Endothelial cell of umbilical vein (primary cell): ENCODE measurements at regions of chr10 and their contacts with region 1.

Region 1: DNA sequence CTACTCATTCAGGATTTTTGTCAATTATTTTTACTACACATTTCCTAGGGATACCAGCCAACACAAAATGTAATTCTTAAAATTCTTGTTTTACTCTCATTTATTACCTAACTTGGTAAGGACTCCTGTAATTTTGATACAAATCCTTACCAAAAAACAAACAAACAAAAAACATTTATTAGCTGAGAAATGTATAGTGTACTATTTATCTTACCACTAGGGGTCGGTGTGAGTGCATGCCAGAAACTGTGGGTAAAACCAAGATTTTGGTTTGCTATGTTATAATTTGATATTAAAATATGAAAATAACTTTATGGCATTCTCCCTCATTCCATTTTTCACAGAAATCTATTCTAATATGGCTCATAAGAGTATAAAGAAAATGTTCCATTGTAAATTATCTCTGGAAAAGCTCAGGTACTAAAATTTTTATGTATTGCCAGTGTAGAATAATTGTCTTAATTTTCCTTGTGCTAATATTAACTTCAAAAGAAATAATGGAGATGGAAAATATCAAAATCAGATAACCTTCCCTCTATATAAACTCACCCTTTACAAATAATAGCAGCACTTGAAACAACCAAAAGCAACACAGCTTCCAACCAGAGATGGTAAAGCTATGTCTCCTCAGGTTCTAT is 290.8 kb upstream of the PCDH15 start:
- DNase-seq: peak; percentile 21
- H3K4me3 ChIP-seq: no peak overlapping the region
- H3K27ac ChIP-seq: no peak overlapping the region
- H3K4me1 ChIP-seq: no peaks in the 10 kb centered on the region
- H3K27me3 ChIP-seq: no peaks in the 10 kb centered on the region
- CTCF ChIP-seq: peak; percentile 44 to 53
- POLR2A ChIP-seq: no peak

Region 2: GRCh38 chr10:55104738-55105137 is 12.9 kb after region 1 on chr10:
- CTCF ChIA-PET with region 1: interaction called, 11 read pairs
- POLR2A ChIA-PET with region 1: no interaction called
- dilution Hi-C with region 1: no loop called
- intact Hi-C with region 1: no loop called
- DNase-seq: no peak
- H3K4me3 ChIP-seq: no peak overlapping the region
- H3K27ac ChIP-seq: no peak overlapping the region
- H3K4me1 ChIP-seq: no peaks in the 10 kb centered on the region
- H3K27me3 ChIP-seq: no peaks in the 10 kb centered on the region
- CTCF ChIP-seq: no peak
- POLR2A ChIP-seq: no peak

Region 3: DNA sequence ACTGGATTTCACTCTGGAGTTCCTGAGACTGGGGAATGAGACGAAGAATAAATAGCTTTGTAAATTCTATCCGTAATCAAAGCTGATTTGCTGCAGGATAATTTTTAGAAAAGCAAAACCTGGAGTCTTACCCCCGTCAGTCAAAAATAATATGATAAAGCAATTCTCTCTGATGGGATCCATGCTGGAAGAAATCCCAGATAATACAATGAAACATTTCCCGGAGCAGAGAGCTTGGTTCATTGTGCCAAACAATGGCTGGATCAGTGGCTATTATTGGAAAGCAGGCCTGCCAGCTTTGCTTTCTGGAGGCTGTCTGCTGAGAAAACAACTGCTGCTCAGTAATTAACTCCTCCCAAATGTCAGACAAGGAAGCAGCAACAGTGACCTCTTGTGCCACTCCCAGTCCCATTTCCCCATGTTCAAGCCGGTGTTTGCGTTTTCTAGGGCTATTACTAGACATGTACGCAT is 318.6 kb after region 1 on chr10:
- CTCF ChIA-PET with region 1: interaction called, 3 read pairs
- POLR2A ChIA-PET with region 1: no interaction called
- dilution Hi-C with region 1: no loop called
- intact Hi-C with region 1: loop called (anchors 2 kb)
- DNase-seq: peak; percentile 91
- H3K4me3 ChIP-seq: no peak overlapping the region
- H3K27ac ChIP-seq: peak overlapping the region; percentile 1
- H3K4me1 ChIP-seq: peaks cover 12% of the 10 kb centered on the region
- H3K27me3 ChIP-seq: no peaks in the 10 kb centered on the region
- CTCF ChIP-seq: no peak
- POLR2A ChIP-seq: no peak

Region 4: GRCh38 chr10:55500932-55501559 is 409.2 kb after region 1 on chr10:
- CTCF ChIA-PET with region 1: no interaction called
- POLR2A ChIA-PET with region 1: no interaction called
- dilution Hi-C with region 1: no loop called
- intact Hi-C with region 1: loop called (anchors 1 kb)
- DNase-seq: peak; percentile 57
- H3K4me3 ChIP-seq: no peak overlapping the region
- H3K27ac ChIP-seq: no peak overlapping the region
- H3K4me1 ChIP-seq: no peaks in the 10 kb centered on the region
- H3K27me3 ChIP-seq: no peaks in the 10 kb centered on the region
- CTCF ChIP-seq: peak; percentile 58 to 64
- POLR2A ChIP-seq: no peak

Region 5: DNA sequence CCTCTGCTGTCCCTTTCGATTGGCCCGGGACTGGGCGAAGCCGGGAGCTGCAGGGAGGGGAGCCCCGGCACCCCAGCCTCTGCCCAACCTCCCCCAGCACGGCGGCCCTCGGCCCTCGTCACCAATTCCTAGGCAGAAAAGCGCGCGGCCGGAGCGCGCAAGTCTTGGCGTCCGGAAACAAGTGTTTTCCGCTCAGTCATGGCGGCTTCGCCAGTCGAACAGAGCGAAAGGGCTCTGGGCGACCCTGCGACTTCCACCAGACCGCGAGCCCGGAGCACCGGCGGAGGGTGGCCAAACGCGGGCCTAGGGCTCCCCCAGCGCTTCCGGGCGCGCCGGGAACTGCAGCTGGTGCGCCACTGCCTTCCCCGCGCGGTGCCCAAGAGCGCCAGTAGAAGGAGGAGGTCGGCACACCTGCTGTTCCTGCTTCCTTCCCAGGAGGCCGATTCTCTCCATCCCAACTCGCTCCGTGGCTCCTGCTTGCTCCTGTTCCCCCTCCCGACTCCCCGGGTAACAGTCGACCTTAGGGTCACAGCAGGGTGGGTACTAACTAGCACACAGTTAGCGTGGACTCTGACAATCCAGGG is 539.4 kb after region 1 on chr10:
- CTCF ChIA-PET with region 1: interaction called, 5 read pairs
- POLR2A ChIA-PET with region 1: no interaction called
- dilution Hi-C with region 1: no loop called
- intact Hi-C with region 1: loop called (anchors 2 kb)
- DNase-seq: peak; percentile 32
- H3K4me3 ChIP-seq: peak overlapping the region; percentile 23 to 57 (median 51)
- H3K27ac ChIP-seq: no peak overlapping the region
- H3K4me1 ChIP-seq: peaks cover 17% of the 10 kb centered on the region
- H3K27me3 ChIP-seq: peaks cover 23 to 25% of the 10 kb centered on the region in 2 experiments
- CTCF ChIP-seq: peak; percentile 66 to 71
- POLR2A ChIP-seq: no peak

Region 6: DNA sequence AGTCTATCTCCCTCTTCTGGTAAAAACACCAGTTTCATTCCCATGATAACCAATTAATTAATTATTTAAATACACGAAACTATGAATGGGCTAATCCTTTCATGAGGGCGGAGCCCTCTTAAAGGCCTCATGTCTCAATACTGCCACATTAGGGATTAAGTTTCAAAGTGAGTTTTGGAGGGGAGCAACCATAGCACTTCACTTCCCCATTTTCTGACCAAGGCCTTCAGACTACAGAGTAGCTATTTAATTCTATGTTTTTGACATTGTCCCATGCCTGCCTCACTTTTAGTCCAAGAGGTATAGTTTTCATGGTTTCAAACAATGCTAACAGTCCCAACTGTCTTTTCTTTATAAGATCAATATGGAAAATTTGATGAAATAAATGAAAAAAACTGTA is 650.7 kb after region 1 on chr10:
- CTCF ChIA-PET with region 1: no interaction called
- POLR2A ChIA-PET with region 1: no interaction called
- dilution Hi-C with region 1: no loop called
- intact Hi-C with region 1: loop called (anchors 5 kb)
- DNase-seq: no peak
- H3K4me3 ChIP-seq: no peak overlapping the region
- H3K27ac ChIP-seq: no peak overlapping the region
- H3K4me1 ChIP-seq: no peaks in the 10 kb centered on the region
- H3K27me3 ChIP-seq: no peaks in the 10 kb centered on the region
- CTCF ChIP-seq: no peak
- POLR2A ChIP-seq: no peak